ENCODE measurements at regions of chr7 and their contacts with region 1.

Region 1: DNA sequence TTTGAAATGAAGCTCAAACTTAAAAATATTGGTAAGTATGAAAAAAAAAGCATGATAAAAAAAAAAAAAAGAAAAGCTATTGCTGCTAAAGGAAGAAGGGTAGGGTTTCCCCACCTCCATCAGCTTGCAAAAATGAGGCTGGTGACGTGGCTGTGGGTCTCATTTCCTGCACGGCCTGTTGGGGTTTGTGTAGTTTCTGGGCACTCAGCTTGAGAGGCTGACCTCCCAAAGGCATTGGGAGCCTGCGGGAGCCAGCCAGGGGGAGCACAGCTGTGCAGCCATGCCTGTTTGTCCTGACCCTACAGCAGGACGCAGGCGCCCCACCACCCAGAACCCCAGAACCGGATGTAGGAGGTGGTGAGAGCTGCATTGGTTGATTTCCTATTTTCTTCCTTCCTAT is 48.8 kb upstream of the CARD11 start:
- DNase-seq: no peak
- H3K4me3 ChIP-seq: no peak overlapping the region
- H3K27ac ChIP-seq: no peak overlapping the region
- H3K4me1 ChIP-seq: no peaks in the 10 kb centered on the region
- H3K27me3 ChIP-seq: no peaks in the 10 kb centered on the region
- CTCF ChIP-seq: no peak
- EP300 ChIP-seq: no peak
- RAD21 ChIP-seq: no peak

Region 2: DNA sequence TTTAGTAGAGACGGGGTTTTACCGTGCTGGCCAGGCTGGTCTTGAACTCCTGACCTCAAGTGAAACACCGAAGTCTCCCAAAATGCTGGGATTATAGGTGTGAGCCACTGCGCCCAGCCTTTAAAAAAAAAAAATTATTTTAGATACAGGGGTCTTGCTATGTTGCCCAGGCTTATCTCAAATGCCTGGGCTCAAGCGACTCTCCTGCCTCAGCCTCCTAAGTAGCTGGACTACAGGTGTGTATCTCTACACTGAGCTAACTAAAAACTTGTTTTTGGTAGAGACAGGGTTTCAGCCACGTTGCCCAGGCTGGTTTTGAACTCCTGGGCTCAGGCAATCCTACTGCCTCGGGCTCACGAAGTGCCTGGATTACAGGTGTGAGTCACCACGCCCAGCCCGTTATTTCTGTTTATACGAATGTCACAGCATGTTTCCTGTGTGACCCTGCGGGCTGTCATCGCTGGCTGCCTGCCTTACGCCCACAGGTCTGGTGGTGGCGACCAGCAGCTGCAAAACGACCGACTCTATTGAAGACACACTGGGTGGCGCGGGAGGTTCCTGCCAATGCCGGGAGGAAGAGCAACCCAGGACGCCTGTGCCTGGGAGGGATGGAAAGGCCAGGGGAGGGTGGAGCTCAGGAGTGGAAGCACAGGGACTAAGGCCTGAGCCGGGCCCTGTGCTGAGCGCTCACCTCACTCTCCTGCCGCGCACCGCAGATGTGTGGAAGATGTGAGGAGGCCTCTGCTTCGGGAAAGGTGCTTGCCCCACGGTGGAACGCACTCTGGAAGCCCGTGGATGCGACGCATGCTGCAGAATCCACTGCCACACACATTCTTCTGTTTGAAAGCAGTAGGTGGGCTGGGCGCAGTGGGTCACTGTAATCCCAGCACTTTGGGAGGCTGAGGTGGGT is 371.6 kb before region 1 on chr7:
- CTCF ChIA-PET with region 1: no interaction called
- POLR2A ChIA-PET with region 1: no interaction called
- DNase-seq: no peak
- H3K4me3 ChIP-seq: no peak overlapping the region
- H3K27ac ChIP-seq: no peak overlapping the region
- H3K4me1 ChIP-seq: peaks cover 0 to 25% of the 10 kb centered on the region in 2 experiments; a peak in 1 of 4 replicates
- H3K27me3 ChIP-seq: no peaks in the 10 kb centered on the region
- CTCF ChIP-seq: no peak
- EP300 ChIP-seq: no peak
- RAD21 ChIP-seq: 0 out of 2 replicates have a peak, but pooled peaks have one; percentile 14

Region 3: GRCh38 chr7:3056234-3057065 is 36.0 kb before region 1 on chr7:
- CTCF ChIA-PET with region 1: interaction called, 10 read pairs
- POLR2A ChIA-PET with region 1: no interaction called
- DNase-seq: no peak
- H3K4me3 ChIP-seq: no peak overlapping the region
- H3K27ac ChIP-seq: no peak overlapping the region
- H3K4me1 ChIP-seq: peaks cover 0 to 2% of the 10 kb centered on the region in 2 experiments; a peak in 1 of 4 replicates
- H3K27me3 ChIP-seq: no peaks in the 10 kb centered on the region
- CTCF ChIP-seq: no peak
- EP300 ChIP-seq: no peak
- RAD21 ChIP-seq: no peak

Region 4: GRCh38 chr7:3078514-3078913 is 14.0 kb before region 1 on chr7:
- CTCF ChIA-PET with region 1: interaction called, 21 read pairs
- POLR2A ChIA-PET with region 1: no interaction called
- DNase-seq: peak; percentile 55
- H3K4me3 ChIP-seq: no peak overlapping the region
- H3K27ac ChIP-seq: no peak overlapping the region
- H3K4me1 ChIP-seq: peaks cover 0 to 24% of the 10 kb centered on the region in 2 experiments; a peak in 1 of 4 replicates
- H3K27me3 ChIP-seq: no peaks in the 10 kb centered on the region
- CTCF ChIP-seq: no peak
- EP300 ChIP-seq: no peak; a peak in 1 of 4 replicates
- RAD21 ChIP-seq: no peak

Region 5: GRCh38 chr7:3146571-3147226 is 54.2 kb after region 1 on chr7:
- CTCF ChIA-PET with region 1: interaction called, 10 read pairs
- POLR2A ChIA-PET with region 1: no interaction called
- DNase-seq: no peak
- H3K4me3 ChIP-seq: no peak overlapping the region
- H3K27ac ChIP-seq: no peak overlapping the region
- H3K4me1 ChIP-seq: no peaks in the 10 kb centered on the region
- H3K27me3 ChIP-seq: no peaks in the 10 kb centered on the region
- CTCF ChIP-seq: no peak
- EP300 ChIP-seq: no peak
- RAD21 ChIP-seq: no peak